Ascending aorta (tissue), 2 donors: ENCODE measurements at regions of chr20 and their contacts with region 1.

Region 1: GRCh38 chr20:49713753-49714712 is at the start of gene B4GALT5:
- DNase-seq: peak in 1 of 2 donors; percentile 76
- H3K4me3 ChIP-seq: peak within 1 kb of the TSS; percentile 95
- H3K27ac ChIP-seq: peak within 1 kb of the TSS; percentile 92 to 93
- H3K4me1 ChIP-seq: peaks cover 0 to 8% of the 10 kb centered on the region in 2 donors
- H3K27me3 ChIP-seq: no peaks in the 10 kb centered on the region
- CTCF ChIP-seq: no peak
- total RNA-seq, gene B4GALT5: 15.0 TPM

Region 2: DNA sequence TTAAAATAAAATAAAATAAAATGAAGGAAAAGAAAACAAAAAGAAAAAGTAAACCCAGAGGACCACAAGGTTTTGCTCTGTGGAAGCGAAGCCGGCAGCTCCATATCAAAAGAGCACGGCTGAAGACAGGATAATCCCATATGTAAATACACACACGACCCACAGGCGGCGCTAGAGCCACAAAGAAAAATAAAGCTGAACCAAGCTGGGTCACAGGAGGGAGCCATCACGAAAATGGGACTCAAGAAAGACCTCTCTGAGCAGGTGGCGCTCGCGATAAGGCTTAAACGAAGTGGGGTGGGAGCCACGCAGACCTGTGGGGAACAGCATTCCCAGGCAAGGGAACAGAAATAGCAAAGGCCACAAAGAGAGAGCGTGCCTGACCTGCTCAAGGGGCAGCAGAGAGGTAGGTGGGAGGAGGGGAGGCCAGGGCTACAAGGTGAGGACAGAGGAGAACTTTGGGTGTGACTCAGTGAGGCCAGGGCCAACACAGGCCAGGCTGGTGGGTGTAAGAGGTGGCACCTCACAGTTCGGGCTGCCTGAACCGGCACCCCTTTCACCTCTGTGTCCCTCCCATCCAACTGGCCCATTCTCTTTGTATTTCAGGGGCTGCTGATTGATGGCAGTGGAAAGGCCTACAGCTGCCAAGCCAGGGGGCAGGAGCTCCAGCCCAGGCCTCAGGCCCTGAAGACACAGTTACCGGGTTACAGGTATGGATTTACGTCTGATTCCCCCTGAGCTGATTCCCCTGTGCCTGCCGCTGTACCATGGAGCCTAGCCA is 172.1 kb before region 1 on chr20:
- intact Hi-C with region 1: loop called (anchors 10 kb)
- DNase-seq: peak in 1 of 2 donors; percentile 84
- H3K4me3 ChIP-seq: no peak overlapping the region
- H3K27ac ChIP-seq: peak overlapping the region; percentile 73 to 84
- H3K4me1 ChIP-seq: peaks cover 0 to 15% of the 10 kb centered on the region in 2 donors
- H3K27me3 ChIP-seq: no peaks in the 10 kb centered on the region
- CTCF ChIP-seq: peak; percentile 91 to 96 (median 92)

Region 3: DNA sequence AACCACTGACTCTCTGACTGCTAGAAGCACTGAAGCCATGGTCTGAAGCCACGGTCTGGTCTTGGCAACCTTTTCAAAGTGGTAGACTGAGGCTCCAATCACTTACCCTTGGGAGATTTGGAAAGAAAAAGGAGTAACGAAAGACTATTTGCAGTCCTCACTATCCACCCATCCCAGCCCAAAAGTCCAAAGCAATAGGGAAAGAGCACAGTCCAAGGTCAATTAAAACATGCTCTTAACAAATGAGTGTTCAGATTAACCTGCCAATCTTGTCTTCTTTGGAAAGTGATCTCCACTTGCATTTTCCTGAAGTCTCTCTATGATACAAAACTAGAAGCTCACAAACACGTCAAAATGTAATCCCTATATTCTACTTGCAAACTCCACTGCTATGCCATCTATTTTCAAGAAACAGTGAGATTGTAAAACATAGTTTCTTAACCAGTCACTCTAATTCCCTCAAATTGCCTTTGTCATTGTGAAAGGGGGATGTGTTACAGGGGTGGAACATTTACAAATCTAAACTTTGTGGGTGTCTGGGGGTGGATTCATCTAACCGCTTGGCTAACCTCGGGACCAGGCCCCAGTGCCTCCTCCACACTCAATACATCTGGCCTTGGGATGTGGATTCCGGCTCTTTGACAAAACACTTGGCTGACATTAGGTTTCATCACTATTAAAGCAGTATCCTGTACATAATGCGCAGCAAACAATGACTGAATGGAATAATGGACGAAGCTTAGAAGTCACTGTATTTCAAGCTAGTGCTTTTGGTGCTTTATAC is 56.7 kb before region 1 on chr20:
- intact Hi-C with region 1: loop called (anchors 10 kb)
- DNase-seq: no peak
- H3K4me3 ChIP-seq: no peak overlapping the region
- H3K27ac ChIP-seq: peak overlapping the region; percentile 23 to 46
- H3K4me1 ChIP-seq: peaks cover 0 to 8% of the 10 kb centered on the region in 2 donors
- H3K27me3 ChIP-seq: no peaks in the 10 kb centered on the region
- CTCF ChIP-seq: no peak

Region 4: DNA sequence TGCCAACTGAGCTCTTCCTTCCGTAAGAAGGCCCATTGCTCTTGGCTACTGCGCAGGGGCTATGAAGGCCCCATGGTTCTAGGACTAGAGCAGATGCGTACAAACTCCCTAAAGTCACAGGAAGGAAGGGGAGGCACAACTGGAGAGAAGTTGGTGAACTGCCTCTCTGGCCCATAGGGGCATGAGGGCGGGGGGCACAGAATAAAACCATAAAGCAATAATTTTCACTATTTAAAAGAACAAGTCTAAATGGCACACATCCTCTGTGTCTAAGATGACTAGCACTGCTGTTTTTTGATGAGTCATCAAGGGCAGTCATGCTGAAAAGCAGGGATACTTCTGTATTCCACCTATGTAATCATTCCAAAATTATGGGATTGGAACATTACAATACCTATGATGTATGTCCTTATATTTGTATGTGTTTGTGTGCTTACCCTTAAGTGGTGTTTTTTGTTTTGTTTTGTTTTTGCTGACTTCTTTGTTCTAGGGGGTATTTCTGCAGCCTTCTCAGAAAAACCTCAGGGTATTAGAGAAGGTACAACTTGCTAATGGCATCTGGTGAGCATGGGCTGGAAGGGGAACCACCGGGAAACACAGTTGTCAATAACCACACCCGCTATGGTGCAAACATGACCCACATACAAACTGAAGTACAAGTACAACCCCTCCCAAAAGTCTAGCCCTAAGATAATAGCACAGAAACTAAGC is 37.3 kb before region 1 on chr20:
- intact Hi-C with region 1: loop called (anchors 5 kb)
- DNase-seq: no peak
- H3K4me3 ChIP-seq: no peak overlapping the region
- H3K27ac ChIP-seq: no peak overlapping the region
- H3K4me1 ChIP-seq: peaks cover 16 to 48% of the 10 kb centered on the region in 2 donors
- H3K27me3 ChIP-seq: no peaks in the 10 kb centered on the region
- CTCF ChIP-seq: no peak

Region 5: DNA sequence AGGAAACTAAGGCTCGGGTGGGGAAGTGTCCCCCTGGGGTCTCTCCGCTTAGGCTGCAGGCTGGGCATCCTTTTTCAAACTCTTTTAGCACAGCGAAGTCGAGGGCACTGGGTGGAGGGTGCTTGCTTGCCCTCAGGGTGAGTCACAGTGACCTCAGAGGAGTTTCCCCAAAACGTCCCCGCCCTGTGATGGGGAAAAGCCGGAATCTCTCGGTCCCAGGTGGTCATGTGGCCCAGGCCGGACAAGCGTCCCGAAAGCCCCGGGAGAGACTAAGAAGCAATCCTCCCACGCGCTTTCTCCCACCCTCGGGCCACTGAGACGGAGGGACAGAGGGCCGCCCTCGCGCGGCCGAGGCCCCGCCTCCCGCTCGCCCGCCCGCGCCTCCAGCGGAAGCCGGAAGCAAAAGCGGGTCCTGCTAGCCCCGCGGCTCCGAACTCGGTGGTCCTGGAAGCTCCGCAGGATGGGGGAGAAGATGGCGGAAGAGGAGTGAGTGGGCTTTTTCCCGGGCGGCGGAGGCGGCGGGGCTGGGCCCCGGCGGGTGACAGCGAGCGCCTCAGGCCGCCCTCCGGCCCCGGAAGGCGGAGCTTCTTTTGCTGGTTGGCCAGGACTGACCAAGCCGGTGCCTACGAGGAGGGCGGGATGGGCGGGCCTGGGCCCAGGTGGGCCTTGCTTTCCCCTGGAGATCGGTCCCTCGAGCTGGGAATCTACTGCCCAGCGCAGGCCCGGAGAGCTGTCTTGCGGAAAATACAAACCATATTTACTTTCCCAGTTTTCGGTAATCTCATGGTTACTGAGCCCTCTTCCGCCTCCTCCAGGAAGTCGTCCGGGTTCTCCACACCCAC is 98.7 kb after region 1 on chr20 and contains the start of gene SLC9A8:
- intact Hi-C with region 1: loop called (anchors 1 kb)
- DNase-seq: peak; percentile 73 to 96
- H3K4me3 ChIP-seq: peak within 1 kb of the TSS; percentile 72 to 94
- H3K27ac ChIP-seq: peak within 1 kb of the TSS; percentile 89 to 96
- H3K4me1 ChIP-seq: peaks cover 0 to 8% of the 10 kb centered on the region in 2 donors
- H3K27me3 ChIP-seq: no peaks in the 10 kb centered on the region
- CTCF ChIP-seq: peak in 2 of 3 experiments; percentile 38 to 39
- total RNA-seq, gene SLC9A8: 9.7 TPM

Region 6: GRCh38 chr20:49915378-49916145 is 201.5 kb after region 1 on chr20 and contains the start of gene SPATA2:
- intact Hi-C with region 1: loop called (anchors 10 kb)
- DNase-seq: peak; percentile 89 to 99
- H3K4me3 ChIP-seq: peak within 1 kb of the TSS; percentile 83 to 88
- H3K27ac ChIP-seq: peak within 1 kb of the TSS; percentile 95 to 100
- H3K4me1 ChIP-seq: peaks cover 7 to 18% of the 10 kb centered on the region in 2 donors
- H3K27me3 ChIP-seq: no peaks in the 10 kb centered on the region
- CTCF ChIP-seq: no peak
- total RNA-seq, gene SPATA2: 7.6 TPM